Ascending aorta (tissue), 2 donors: ENCODE measurements at regions of chr12 and their contacts with region 1.

Region 1: GRCh38 chr12:53675651-53676453 is at the start of gene ATP5MC2:
- DNase-seq: peak; percentile 92 to 98
- H3K4me3 ChIP-seq: peak within 1 kb of the TSS; percentile 74 to 92
- H3K27ac ChIP-seq: peak within 1 kb of the TSS; percentile 95 to 96
- H3K4me1 ChIP-seq: peaks cover 7 to 22% of the 10 kb centered on the region in 2 donors
- H3K27me3 ChIP-seq: no peaks in the 10 kb centered on the region
- CTCF ChIP-seq: peak; percentile 96 to 100 (median 98)
- total RNA-seq, gene ATP5MC2: 284 TPM

Region 2: GRCh38 chr12:53313996-53314395 is 361.9 kb before region 1 on chr12:
- intact Hi-C with region 1: no loop called
- DNase-seq: no peak
- H3K4me3 ChIP-seq: no peak overlapping the region
- H3K27ac ChIP-seq: no peak overlapping the region
- H3K4me1 ChIP-seq: no peaks in the 10 kb centered on the region
- H3K27me3 ChIP-seq: no peaks in the 10 kb centered on the region
- CTCF ChIP-seq: no peak

Region 3: GRCh38 chr12:53543539-53543938 is 132.3 kb before region 1 on chr12:
- intact Hi-C with region 1: loop called (anchors 1 kb)
- DNase-seq: peak in 1 of 2 donors; percentile 78
- H3K4me3 ChIP-seq: no peak overlapping the region
- H3K27ac ChIP-seq: peak overlapping the region; percentile 57 to 65
- H3K4me1 ChIP-seq: peaks cover 0 to 7% of the 10 kb centered on the region in 2 donors
- H3K27me3 ChIP-seq: no peaks in the 10 kb centered on the region
- CTCF ChIP-seq: peak; percentile 77 to 94 (median 89)

Region 4: GRCh38 chr12:53561590-53561953 is 114.3 kb before region 1 on chr12:
- intact Hi-C with region 1: loop called (anchors 5 kb)
- DNase-seq: no peak
- H3K4me3 ChIP-seq: no peak overlapping the region
- H3K27ac ChIP-seq: peak overlapping the region; percentile 71 to 78
- H3K4me1 ChIP-seq: peaks cover 22 to 63% of the 10 kb centered on the region in 2 donors
- H3K27me3 ChIP-seq: no peaks in the 10 kb centered on the region
- CTCF ChIP-seq: no peak

Region 5: GRCh38 chr12:53625946-53626701 is 49.7 kb before region 1 on chr12 and contains the start of gene ATF7:
- intact Hi-C with region 1: loop called (anchors 1 kb)
- DNase-seq: peak; percentile 88 to 98
- H3K4me3 ChIP-seq: peak within 1 kb of the TSS; percentile 73 to 74
- H3K27ac ChIP-seq: peak within 1 kb of the TSS; percentile 81 to 93
- H3K4me1 ChIP-seq: peaks cover 0 to 15% of the 10 kb centered on the region in 2 donors
- H3K27me3 ChIP-seq: no peaks in the 10 kb centered on the region
- CTCF ChIP-seq: no peak
- total RNA-seq, gene ATF7: 67.6 TPM

Region 6: DNA sequence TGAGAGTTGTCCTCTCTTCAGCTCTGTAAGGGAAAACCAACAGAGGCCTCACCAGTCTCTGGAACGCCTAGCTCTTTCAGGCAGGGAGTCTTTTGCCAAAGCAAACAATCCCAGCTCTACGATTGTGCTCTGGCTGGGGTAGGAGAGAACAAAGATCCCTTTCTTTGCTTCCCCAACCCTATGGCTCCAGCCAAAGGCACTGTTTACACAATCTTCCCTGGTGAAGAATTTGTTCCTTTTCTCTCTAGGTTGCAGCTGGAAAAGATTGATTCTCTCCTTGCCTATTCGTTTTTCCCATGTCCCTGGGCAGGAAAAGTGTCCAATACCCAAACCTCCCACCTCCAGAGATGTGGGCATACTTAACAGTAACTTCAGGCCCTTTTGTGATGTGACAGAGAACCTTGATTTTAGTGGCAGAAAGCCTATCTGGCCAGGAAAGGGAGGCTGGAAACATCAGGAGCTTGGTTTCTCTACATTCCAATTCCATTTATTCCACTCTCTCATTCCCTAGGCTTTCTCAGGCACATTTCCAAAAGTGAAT is 16.8 kb before region 1 on chr12:
- intact Hi-C with region 1: loop called (anchors 2 kb)
- DNase-seq: peak in 1 of 2 donors; percentile 81
- H3K4me3 ChIP-seq: peak overlapping the region; percentile 7 to 50
- H3K27ac ChIP-seq: peak overlapping the region; percentile 90 to 91
- H3K4me1 ChIP-seq: peaks cover 3 to 23% of the 10 kb centered on the region in 2 donors
- H3K27me3 ChIP-seq: no peaks in the 10 kb centered on the region
- CTCF ChIP-seq: no peak

Region 7: DNA sequence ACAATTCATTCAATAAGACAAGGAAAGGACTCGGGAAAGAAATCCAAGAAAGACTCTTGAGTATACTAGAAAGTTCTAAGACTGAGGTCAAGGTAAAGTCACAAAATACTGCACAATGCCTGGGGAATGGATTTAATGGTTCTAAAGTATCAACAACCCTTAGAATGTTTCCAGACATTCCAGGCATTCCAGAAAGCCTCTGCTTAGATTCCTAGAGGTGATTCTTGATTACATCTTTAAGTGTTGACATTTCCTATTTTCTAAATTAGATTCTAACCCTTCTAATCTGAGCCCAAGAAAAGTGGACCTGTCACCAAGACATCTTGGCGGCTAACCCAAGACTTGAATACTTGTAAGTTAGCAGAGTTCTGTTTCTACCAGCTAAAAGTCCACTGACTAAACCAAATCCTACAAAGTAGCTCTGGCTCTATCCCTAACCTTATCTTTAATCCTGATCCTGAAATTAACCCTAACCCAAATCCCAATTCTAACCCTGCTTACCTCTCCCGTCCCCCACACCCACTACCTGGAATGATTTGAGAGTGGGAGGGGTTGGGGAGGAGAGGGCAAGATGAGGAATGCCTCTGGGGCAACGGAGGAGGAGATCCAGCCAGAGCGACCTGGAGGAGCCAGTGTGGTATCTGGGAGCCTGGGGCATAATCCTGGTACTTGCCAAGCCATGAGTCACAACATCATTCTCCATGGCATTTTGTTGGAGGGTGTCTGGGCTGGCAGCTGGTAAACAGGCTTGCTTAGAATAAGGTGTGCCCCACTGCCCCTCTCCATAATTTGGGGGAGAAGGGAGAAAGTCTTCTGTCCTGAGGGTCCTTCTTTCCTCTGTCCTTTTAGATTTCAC is 169.4 kb after region 1 on chr12:
- intact Hi-C with region 1: no loop called
- DNase-seq: no peak
- H3K4me3 ChIP-seq: no peak overlapping the region
- H3K27ac ChIP-seq: no peak overlapping the region
- H3K4me1 ChIP-seq: no peaks in the 10 kb centered on the region
- H3K27me3 ChIP-seq: no peaks in the 10 kb centered on the region
- CTCF ChIP-seq: no peak